ENCODE measurements at regions of chr4 and their contacts with region 1.

Region 1: GRCh38 chr4:119971431-119972084 is 95.1 kb downstream of the MAD2L1 start:
- DNase-seq: no peak
- H3K4me3 ChIP-seq: no peak overlapping the region
- H3K27ac ChIP-seq: peak overlapping the region in 3 of 4 donors; percentile 57 to 60 (median 60)
- H3K4me1 ChIP-seq: peaks cover 0 to 32% (median 17%) of the 10 kb centered on the region in 4 donors
- H3K27me3 ChIP-seq: no peaks in the 10 kb centered on the region
- CTCF ChIP-seq: no peak
- EP300 ChIP-seq: peak in 2 of 4 donors; percentile 5 to 31
- POLR2A ChIP-seq: no peak

Region 2: GRCh38 chr4:119683518-119683917 is 288.0 kb before region 1 on chr4:
- intact Hi-C with region 1: loop called (anchors 5 kb)
- DNase-seq: no peak
- H3K4me3 ChIP-seq: no peak overlapping the region
- H3K27ac ChIP-seq: peak overlapping the region; percentile 47 to 74 (median 70)
- H3K4me1 ChIP-seq: peaks cover 0 to 57% (median 42%) of the 10 kb centered on the region in 4 donors
- H3K27me3 ChIP-seq: no peaks in the 10 kb centered on the region
- CTCF ChIP-seq: no peak
- EP300 ChIP-seq: peak in 1 of 4 donors; percentile 45
- POLR2A ChIP-seq: no peak

Region 3: GRCh38 chr4:119930546-119930945 is 41.0 kb before region 1 on chr4:
- intact Hi-C with region 1: no loop called
- DNase-seq: no peak
- H3K4me3 ChIP-seq: no peak overlapping the region
- H3K27ac ChIP-seq: no peak overlapping the region
- H3K4me1 ChIP-seq: no peaks in the 10 kb centered on the region
- H3K27me3 ChIP-seq: no peaks in the 10 kb centered on the region
- CTCF ChIP-seq: no peak
- EP300 ChIP-seq: no peak
- POLR2A ChIP-seq: no peak

Region 4: DNA sequence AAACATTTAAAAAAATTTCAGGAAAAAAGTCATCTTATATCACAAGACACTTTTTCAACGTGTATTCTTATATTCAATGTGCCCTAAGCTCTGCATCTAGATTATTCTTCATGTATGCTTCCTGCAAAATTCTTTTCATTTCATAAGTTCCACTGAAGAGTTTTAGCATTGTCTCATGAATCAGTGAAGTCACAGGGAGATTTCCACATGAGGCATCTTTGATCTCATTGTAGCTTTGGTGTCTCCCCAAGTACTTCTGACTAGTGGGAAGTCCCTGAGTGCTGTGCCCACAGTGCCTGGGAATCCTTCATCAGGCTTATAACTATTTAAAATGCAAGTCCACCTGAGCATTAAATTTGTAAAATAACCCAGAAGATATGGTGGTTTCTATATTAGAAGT is 28.8 kb before region 1 on chr4:
- intact Hi-C with region 1: no loop called
- DNase-seq: no peak
- H3K4me3 ChIP-seq: no peak overlapping the region
- H3K27ac ChIP-seq: no peak overlapping the region
- H3K4me1 ChIP-seq: peaks cover 0 to 8% (median 3%) of the 10 kb centered on the region in 4 donors
- H3K27me3 ChIP-seq: no peaks in the 10 kb centered on the region
- CTCF ChIP-seq: no peak
- EP300 ChIP-seq: no peak
- POLR2A ChIP-seq: no peak